ENCODE measurements at regions of chr1 and their contacts with region 1.

Region 1: DNA sequence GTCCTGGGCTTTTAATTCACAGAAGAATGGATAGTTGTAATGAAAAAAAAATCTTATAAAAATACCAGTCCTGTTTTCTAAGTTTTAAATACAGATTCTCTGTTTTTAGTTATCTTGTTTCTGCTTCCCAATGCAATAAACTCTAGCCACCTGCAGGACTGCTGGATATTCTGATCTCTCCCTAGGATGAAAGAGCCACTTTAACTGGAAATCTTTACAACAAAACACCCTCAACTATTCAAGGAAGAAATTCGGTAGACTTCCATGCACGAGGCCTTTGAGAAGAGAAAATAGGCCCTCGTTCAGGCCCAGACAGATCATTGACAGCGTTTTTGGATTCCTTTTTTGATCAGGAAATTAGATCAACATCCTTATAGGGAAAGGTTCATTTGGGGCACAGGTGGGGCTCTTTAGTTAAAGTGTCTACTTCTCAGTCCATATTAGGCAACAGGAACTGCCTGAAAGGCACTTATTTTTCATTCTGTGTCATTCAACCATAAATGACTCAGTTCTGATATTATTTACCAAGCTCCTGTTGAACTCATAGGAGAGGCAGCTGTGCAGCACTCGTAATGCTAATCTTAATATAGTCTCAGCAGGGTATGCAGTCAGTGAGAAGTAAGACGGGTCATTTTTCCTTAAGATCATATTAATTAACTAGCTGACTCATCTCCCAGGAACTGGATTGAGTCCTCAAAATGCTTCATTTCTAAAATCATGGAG is 71.1 kb upstream of the ERRFI1 start:
- DNase-seq: peak; percentile 50 to 98
- H3K4me3 ChIP-seq: peak overlapping the region; percentile 42; the same call in 1 of the 2 replicates
- H3K27ac ChIP-seq: peak overlapping the region; percentile 100
- H3K4me1 ChIP-seq: peaks cover 55% of the 10 kb centered on the region
- H3K27me3 ChIP-seq: no peaks in the 10 kb centered on the region
- CTCF ChIP-seq: no peak

Region 2: DNA sequence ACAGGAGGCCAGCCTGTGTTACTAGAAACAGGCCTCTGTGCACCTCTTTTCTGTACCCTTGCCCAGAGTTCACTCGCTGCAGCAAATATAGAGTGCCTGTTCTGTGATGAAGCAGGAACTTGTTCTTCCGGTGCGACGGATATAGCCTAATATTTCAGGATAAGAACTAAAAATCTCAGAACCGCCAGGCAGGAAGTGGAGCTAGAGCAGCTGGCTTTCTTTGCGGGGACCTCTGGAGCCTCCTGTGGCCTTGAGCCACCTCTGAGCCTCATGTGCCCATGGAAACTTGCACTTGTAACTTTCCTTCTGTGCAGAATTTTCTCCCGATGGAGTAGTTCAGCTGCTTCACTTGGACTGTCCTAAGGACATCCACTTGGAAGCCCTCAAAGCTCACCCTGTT is 370.6 kb before region 1 on chr1:
- CTCF ChIA-PET with region 1: no interaction called
- POLR2A ChIA-PET with region 1: no interaction called
- intact Hi-C with region 1: no loop called
- DNase-seq: no peak
- H3K4me3 ChIP-seq: no peak overlapping the region
- H3K27ac ChIP-seq: no peak overlapping the region
- H3K4me1 ChIP-seq: no peaks in the 10 kb centered on the region
- H3K27me3 ChIP-seq: peaks cover 72% of the 10 kb centered on the region
- CTCF ChIP-seq: no peak

Region 3: GRCh38 chr1:8026153-8026975 is 70.9 kb before region 1 on chr1 and contains the start of gene ERRFI1:
- CTCF ChIA-PET with region 1: no interaction called
- POLR2A ChIA-PET with region 1: interaction called, 10 read pairs
- intact Hi-C with region 1: loop called (anchors 2 kb)
- DNase-seq: peak; percentile 74 to 95
- H3K4me3 ChIP-seq: peak within 1 kb of the TSS; percentile 91
- H3K27ac ChIP-seq: peak within 1 kb of the TSS; percentile 98
- H3K4me1 ChIP-seq: peaks cover 26% of the 10 kb centered on the region
- H3K27me3 ChIP-seq: no peaks in the 10 kb centered on the region
- CTCF ChIP-seq: no peak
- total RNA-seq, gene ERRFI1: 44.9 and 47.8 TPM in 2 replicates

Region 4: DNA sequence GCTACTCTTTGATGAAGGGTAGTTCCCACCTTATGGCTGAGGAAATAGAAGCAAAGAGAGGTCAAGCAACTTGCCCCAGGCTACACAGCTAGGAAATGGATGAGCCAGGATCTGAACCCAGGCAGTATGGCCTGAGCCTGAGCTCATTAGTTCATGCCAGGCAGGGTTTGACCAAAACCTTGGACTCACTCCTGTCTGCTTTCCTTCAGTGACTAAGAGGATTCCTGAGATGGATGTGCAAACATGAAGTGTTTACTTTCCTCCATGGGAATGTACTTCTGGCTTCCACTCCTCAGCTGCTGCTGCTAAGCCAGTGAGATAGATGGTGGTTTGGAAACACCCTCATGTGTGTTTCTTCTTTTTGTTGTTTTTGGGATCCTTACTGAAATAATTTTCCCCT is 36.0 kb before region 1 on chr1:
- CTCF ChIA-PET with region 1: no interaction called
- POLR2A ChIA-PET with region 1: interaction called, 8 read pairs
- intact Hi-C with region 1: loop called (anchors 1 kb)
- DNase-seq: peak; percentile 61 to 95
- H3K4me3 ChIP-seq: peak overlapping the region; percentile 47; the same call in 1 of the 2 replicates
- H3K27ac ChIP-seq: peak overlapping the region; percentile 99
- H3K4me1 ChIP-seq: peaks cover 62% of the 10 kb centered on the region
- H3K27me3 ChIP-seq: no peaks in the 10 kb centered on the region
- CTCF ChIP-seq: no peak

Region 5: DNA sequence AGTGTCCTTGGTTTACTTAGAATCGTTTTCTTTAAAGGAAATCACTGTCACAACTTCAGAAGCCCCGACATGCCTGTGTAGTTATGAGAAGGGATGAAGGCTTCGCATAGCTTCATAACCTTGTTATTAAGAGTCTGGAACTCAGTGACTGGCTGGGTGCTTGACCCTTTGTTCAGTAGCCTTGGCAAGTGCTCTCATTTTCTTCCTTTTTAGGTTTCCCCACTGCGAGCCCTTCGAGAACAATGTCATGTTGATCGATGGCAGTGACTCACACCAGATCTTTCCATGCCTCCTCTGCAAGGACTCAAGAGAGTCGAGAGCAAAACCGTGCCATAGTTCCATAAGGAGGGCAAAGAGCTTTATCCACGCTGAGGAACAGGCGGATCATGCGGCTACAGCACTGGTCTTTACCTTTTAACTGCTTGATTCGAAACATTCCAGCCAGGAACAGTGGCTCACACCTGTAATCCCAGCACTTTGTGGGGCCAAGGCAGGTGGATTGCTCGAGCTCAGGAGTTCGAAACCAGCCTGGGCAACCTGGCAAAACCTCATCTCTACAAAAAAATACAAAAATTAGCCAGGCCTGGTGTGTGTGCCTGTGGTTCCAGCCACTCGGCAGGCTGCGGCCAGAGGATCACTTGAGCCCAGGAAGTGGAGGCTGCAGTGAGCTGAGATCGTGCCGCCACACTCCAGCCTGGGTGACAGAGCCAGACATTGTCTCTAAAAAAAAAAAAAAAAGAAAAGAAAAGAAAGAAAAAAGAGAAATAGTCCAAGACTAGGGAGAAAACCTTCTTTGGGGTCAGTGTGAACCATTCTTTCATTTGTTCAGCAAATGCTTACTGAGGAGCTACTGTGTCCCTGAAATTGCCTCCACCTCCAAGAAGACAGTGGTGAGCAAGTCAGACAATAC is 24.3 kb after region 1 on chr1:
- CTCF ChIA-PET with region 1: no interaction called
- POLR2A ChIA-PET with region 1: interaction called, 5 read pairs
- intact Hi-C with region 1: loop called (anchors 1 kb)
- DNase-seq: peak; percentile 63 to 96
- H3K4me3 ChIP-seq: peak overlapping the region; percentile 28; the same call in 1 of the 2 replicates
- H3K27ac ChIP-seq: peak overlapping the region; percentile 100
- H3K4me1 ChIP-seq: peaks cover 78% of the 10 kb centered on the region
- H3K27me3 ChIP-seq: no peaks in the 10 kb centered on the region
- CTCF ChIP-seq: no peak

Region 6: DNA sequence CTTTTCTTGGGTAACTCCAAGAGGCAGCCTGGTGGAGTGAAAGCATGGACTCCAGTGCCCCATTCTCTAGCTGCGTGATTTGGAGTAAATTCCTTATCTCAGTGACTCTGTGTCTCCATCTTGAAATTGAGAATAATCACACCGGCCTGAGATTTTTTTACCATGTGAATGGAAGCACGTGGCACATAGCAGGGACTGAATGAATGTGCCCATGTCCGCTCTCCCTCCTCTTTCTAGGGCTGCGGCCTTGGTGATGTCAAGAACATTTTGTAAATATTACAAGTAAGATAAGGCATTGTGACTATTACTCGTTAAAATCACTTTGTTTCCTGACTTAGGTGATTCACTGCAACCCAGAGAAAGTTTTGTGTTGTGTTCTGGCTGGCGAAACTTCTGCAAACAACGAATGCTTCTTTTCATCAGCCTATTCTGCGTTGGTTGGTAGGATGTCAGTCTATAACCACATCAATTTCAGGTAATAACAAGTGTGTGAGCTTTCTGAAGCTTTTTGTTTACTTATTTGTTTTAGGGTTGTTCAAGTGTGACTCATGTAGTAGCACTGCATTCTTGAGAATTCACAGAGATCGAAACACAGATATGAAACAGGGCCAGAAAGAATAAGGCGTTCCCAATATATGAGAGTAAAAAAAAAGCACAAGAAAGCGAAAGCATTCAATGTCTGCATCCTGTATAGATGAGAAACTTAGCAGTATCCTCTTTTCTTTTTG is 85.0 kb after region 1 on chr1:
- CTCF ChIA-PET with region 1: no interaction called
- POLR2A ChIA-PET with region 1: no interaction called
- intact Hi-C with region 1: loop called (anchors 1 kb)
- DNase-seq: peak; percentile 64 to 98
- H3K4me3 ChIP-seq: peak overlapping the region; percentile 28; the same call in 1 of the 2 replicates
- H3K27ac ChIP-seq: peak overlapping the region; percentile 100
- H3K4me1 ChIP-seq: peaks cover 40% of the 10 kb centered on the region
- H3K27me3 ChIP-seq: no peaks in the 10 kb centered on the region
- CTCF ChIP-seq: no peak

Region 7: DNA sequence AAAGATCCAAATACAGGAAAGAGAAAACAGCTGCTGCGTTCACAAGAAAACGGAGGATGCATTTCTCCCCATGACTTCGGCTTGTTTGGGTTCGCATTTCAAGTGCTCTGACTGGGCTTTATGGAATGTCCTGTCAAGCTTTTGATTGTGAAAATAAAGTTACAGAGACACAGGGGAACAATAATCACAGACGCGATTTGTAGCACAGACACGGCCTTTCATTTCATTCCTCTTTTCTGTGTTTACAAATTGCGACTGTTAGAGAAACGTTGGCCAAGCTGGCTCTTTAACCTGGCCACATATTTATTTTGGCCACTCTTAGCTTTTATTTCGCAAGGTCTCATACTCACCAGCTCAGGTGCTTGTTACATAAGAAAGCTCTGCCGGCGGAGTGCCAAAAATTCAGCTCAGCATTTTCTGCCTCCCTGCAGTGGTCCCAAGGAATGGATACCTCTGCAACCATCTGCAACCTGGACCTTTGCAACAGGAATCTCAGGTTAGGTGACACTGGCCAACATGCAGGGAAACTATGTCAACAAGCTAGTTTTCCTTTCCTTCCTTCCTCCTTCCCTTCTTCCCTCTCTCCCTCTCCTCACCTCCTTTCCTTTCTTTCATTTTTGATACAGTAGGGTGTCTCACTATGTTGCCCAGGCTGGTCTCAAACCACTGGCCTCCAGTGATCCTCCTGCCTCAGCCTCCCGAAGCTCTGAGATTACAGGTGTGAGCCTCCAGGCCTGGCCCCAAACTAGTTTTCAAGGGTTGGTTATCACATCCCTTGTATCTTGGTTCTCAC is 162.5 kb after region 1 on chr1:
- CTCF ChIA-PET with region 1: no interaction called
- POLR2A ChIA-PET with region 1: no interaction called
- intact Hi-C with region 1: loop called (anchors 2 kb)
- DNase-seq: peak; percentile 80 to 82
- H3K4me3 ChIP-seq: peak overlapping the region; percentile 49; the same call in 1 of the 2 replicates
- H3K27ac ChIP-seq: peak overlapping the region; percentile 100
- H3K4me1 ChIP-seq: peaks cover 43% of the 10 kb centered on the region
- H3K27me3 ChIP-seq: no peaks in the 10 kb centered on the region
- CTCF ChIP-seq: no peak

Region 8: DNA sequence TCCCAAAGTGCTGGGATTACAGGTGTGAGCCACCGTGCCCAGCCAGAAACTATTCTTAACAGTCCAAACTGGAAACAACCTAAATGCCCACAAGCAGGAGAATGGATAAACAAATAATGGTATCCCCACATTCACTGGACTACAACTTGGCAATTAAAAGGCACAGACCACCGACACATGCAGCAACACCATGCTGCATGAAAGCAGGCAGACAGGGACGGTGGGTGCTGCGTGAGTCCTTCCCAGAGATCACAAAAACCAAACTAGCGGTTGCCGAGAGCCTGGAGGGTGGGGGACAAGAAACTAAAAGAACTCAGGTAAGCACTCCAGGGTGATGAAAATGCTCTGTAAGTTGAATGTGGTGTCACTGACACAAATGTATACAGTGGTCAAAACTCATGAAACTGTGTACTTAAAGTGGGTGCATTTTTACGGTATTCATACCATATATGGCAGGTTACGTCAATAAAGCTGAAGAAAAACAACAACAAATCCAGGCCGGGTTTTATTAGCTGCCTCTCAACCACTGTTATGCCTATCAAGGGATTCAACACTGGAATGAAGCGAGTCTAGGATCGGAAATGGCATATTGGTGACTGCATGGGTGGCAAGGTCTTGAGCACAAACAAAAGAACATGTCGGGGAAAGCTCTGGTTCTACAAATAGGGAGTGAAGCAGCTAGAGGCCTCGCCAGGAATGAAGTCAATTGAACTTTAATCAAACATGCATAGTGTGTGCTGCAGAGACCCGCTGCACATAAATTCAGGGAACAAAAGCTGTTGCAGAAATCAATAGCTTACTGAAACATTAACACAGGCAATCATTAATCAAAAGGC is 273.0 kb after region 1 on chr1:
- CTCF ChIA-PET with region 1: no interaction called
- POLR2A ChIA-PET with region 1: no interaction called
- intact Hi-C with region 1: no loop called
- DNase-seq: no peak
- H3K4me3 ChIP-seq: no peak overlapping the region
- H3K27ac ChIP-seq: no peak overlapping the region
- H3K4me1 ChIP-seq: no peaks in the 10 kb centered on the region
- H3K27me3 ChIP-seq: no peaks in the 10 kb centered on the region
- CTCF ChIP-seq: no peak